ENCODE measurements at regions of chr15 and their contacts with region 1.

Region 1: DNA sequence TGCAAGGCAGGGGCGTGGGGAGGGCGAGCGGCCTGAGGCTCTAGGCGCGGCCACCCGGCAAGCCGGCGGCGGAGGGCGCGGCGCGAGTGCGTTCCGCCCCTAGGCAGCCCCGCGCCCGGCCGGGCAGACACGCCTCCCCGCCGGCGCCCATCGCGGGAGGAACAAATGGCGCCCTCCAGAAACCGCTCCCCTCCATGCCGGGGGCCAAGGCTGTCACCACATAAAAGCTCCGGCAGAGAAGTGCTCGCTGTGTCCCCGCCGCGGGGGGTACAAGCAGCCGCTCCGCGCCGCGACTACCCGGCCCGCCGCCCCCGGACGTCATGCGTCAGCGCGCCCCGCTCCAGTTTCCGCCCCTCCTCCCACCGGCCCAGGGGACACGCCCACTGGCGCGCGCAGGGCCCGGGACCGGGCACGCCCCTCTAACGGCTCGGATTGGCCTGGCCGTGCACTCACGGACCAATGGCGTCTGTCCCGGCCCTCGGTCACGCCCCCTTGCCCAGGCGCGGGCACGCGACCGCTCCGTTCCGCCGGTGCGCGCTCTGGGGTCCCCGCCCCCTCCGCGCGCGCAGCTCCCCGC is 391 bp upstream of the KLF13 start:
- DNase-seq: peak; percentile 100
- H3K4me3 Mint-ChIP-seq: peak overlapping the region; percentile 77
- H3K27ac Mint-ChIP-seq: peak overlapping the region; percentile 79
- H3K4me1 Mint-ChIP-seq: peaks cover 65% of the 10 kb centered on the region
- H3K27me3 Mint-ChIP-seq: no peaks in the 10 kb centered on the region

Region 2: GRCh38 chr15:30903497-30904201 is 422.6 kb before region 1 on chr15 and contains the start of gene FAN1:
- intact Hi-C with region 1: loop called (anchors 10 kb)
- DNase-seq: peak; percentile 72
- H3K4me3 Mint-ChIP-seq: peak within 1 kb of the TSS; percentile 93
- H3K27ac Mint-ChIP-seq: peak within 1 kb of the TSS; percentile 84
- H3K4me1 Mint-ChIP-seq: peaks cover 32% of the 10 kb centered on the region
- H3K27me3 Mint-ChIP-seq: no peaks in the 10 kb centered on the region
- total RNA-seq, gene FAN1: 26.5 and 27.7 TPM in 2 replicates

Region 3: DNA sequence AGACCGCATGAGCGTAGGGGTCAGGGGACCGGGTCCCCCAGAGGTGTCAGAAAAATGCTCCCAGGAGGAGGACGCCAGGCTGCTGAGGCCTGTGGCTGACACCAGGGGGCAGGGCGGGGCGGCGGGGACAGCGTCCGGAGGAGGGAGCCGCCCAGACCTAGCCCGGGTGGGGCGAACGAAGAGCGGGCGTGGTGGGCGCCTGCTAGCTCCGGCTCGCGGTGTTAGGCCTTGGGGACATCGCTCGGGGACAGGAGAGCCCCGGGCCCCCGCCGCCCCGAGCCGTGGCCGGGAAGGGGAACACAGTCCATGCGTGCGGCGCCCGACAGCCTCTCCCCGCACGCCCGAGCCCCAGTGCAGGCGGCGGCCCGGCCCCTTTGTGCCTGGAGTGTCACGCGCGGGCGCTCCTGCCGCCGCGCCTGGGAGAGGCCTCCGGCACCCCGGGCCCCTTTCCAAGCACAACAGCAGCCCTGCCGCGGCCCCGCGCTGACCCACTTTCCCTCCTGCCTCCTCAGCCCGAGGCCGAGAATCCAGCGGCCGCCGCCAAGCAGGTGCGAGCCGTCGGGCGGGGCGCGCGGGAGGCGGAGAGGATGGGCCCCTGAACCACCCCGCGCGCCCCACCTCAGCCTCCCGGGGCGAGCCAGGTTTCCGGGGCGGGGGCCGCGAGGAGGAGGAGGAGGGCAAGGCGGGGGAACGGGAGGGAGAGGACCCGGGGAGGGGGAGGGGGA is 110.6 kb before region 1 on chr15:
- intact Hi-C with region 1: loop called (anchors 1 kb)
- DNase-seq: peak; percentile 76
- H3K4me3 Mint-ChIP-seq: peak overlapping the region; percentile 79
- H3K27ac Mint-ChIP-seq: peak overlapping the region; percentile 73
- H3K4me1 Mint-ChIP-seq: peaks cover 48% of the 10 kb centered on the region
- H3K27me3 Mint-ChIP-seq: no peaks in the 10 kb centered on the region

Region 4: GRCh38 chr15:31302778-31303725 is 23.2 kb before region 1 on chr15:
- intact Hi-C with region 1: loop called (anchors 2 kb)
- DNase-seq: no peak
- H3K4me3 Mint-ChIP-seq: no peak overlapping the region
- H3K27ac Mint-ChIP-seq: no peak overlapping the region
- H3K4me1 Mint-ChIP-seq: peaks cover 34% of the 10 kb centered on the region
- H3K27me3 Mint-ChIP-seq: peaks cover 2% of the 10 kb centered on the region

Region 5: GRCh38 chr15:31344823-31345605 is 18.8 kb after region 1 on chr15:
- intact Hi-C with region 1: loop called (anchors 1 kb)
- DNase-seq: no peak
- H3K4me3 Mint-ChIP-seq: peak overlapping the region; percentile 89
- H3K27ac Mint-ChIP-seq: peak overlapping the region; percentile 99
- H3K4me1 Mint-ChIP-seq: peaks cover 94% of the 10 kb centered on the region
- H3K27me3 Mint-ChIP-seq: no peaks in the 10 kb centered on the region

Region 6: DNA sequence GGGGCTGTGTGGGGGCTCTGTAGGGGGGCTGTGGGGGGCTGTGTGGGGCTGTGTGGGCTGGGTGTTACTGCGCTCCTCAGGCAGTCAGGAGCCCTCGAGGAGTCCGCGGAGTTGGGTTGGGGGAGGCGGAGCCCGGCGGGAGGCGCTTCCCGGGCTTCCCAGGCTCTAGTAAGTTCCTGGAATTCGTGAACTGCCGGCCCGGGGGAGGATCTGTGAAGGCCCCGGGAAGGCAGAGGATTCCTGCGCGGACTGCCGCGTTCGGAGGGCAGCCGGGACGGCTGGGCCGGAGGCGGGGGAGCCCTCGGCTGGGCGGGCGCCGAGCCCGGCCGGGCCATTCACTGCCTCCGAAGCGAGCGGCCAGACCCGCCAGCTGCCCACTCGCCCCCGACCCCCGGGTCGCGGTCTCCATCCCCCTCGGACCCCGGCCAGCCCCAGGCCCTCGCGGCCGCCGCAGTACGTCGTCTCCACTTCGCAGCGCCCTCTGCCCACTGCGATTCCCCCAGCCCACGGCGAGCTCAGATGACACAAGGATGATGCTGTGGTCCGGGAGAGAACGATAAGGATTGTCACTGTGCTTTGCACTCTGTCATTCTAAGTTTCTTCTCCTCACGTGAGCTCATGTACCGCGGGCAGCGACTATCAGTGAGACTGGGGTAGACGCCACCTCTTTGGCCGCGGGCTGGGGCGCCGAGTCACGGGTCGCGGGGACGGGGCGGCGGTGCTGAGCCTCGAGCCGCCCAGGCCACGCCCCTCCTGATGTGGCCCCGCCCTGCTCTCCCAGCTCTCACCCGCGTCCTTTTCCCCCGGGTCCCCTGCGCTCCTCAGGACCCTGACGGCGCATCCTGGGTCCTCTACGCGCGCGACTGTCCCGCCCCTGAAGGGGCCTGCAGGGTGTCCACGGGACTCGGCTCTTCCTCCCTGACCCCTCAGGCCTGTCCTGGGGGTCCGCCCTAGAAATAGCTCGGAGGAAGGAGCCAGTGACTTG is 65.7 kb after region 1 on chr15:
- intact Hi-C with region 1: loop called (anchors 1 kb)
- DNase-seq: peak; percentile 78
- H3K4me3 Mint-ChIP-seq: peak overlapping the region; percentile 86
- H3K27ac Mint-ChIP-seq: peak overlapping the region; percentile 90
- H3K4me1 Mint-ChIP-seq: peaks cover 37% of the 10 kb centered on the region
- H3K27me3 Mint-ChIP-seq: no peaks in the 10 kb centered on the region

Region 7: DNA sequence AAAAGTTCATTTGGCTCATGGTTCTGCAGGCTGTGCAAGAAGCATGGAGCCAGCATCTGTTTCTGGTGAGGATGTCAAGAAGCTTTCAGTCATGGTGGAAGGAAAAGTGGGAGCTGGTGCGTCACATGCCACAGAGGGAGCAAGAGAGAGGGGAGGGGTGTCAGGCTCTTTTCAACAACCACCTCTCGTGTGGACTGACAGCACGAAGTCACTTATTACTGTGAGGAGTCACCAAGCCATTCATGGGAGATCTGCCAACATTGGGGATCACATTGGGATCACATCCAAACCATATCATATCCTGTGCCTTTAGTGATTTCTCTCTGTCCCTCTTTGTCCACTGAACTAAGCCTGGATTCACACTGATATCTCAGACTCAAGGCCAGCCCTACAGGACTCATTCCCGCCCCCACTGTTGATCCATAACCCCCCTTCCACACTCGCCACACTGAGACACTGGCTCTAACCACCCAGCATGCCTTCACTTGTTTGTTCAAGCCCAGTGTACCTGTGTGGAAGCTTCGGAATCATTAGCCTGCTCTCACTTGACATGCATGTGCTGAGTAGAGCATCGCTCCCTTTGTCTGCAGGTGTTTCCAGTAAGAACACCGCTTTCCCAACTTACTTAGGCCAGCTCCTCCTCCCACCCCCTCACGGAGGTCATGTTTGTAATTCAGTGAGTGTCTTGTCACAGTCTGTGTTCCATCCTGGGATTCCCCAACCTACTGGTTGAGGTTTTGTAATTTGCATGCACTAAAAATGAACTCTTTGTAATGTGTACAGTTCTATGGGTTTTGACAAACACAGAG is 132.6 kb after region 1 on chr15:
- intact Hi-C with region 1: loop called (anchors 1 kb)
- DNase-seq: peak; percentile 57
- H3K4me3 Mint-ChIP-seq: peak overlapping the region; percentile 53
- H3K27ac Mint-ChIP-seq: peak overlapping the region; percentile 86
- H3K4me1 Mint-ChIP-seq: peaks cover 38% of the 10 kb centered on the region
- H3K27me3 Mint-ChIP-seq: no peaks in the 10 kb centered on the region

Measured in activated T-helper 1 cell treated with anti-CD3 and anti-CD28 coated beads, Interleukin-12 subunit alpha, Interleukin-12 subunit beta, Interleukin-2, Interleukin-4 antibody, amounts not matched to agents 30 ng/mL and 10 ng/mL and 1 ng/mL, durations not matched to agents 14 hours and 24 hours and 36 hours (primary cell).